Posterior vena cava (tissue), 2 donors: ENCODE measurements at regions of chr7 and their contacts with region 1.

Region 1: DNA sequence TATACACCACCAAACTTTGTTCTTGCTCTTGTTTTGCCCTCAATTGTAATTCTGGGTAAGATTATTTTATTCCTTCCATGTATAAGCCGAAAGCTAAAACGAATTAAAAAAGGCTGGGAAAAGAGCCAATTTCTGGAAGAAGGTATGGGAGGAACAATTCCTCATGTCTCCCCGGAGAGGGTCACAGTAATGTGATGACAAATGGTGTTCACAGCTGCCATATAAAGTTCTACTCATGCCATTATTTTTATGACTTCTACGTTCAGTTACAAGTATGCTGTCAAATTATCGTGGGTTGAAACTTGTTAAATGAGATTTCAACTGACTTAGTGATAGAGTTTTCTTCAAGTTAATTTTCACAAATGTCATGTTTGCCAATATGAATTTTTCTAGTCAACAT is 12.5 kb upstream of the CFAP69 start:
- DNase-seq: no peak

Region 2: DNA sequence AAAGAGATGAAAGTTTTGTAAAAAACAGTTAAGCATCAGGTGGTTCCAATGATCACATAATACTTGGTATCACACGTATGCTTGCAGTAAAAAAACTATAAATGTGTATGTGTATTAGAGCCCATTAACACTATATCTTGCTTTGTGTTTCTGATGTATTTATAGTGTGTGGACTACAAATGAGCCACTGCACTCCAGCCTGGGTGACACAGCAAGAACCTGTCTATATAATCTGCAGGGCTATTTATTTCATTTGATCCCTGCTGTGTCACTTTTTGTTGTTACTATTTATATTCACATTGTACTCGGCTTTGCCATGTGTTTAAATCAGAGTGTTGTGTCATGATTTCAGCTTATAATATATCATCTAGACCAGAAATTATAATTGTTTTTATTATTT is 949.1 kb before region 1 on chr7:
- intact Hi-C with region 1: no loop called
- DNase-seq: no peak

Region 3: DNA sequence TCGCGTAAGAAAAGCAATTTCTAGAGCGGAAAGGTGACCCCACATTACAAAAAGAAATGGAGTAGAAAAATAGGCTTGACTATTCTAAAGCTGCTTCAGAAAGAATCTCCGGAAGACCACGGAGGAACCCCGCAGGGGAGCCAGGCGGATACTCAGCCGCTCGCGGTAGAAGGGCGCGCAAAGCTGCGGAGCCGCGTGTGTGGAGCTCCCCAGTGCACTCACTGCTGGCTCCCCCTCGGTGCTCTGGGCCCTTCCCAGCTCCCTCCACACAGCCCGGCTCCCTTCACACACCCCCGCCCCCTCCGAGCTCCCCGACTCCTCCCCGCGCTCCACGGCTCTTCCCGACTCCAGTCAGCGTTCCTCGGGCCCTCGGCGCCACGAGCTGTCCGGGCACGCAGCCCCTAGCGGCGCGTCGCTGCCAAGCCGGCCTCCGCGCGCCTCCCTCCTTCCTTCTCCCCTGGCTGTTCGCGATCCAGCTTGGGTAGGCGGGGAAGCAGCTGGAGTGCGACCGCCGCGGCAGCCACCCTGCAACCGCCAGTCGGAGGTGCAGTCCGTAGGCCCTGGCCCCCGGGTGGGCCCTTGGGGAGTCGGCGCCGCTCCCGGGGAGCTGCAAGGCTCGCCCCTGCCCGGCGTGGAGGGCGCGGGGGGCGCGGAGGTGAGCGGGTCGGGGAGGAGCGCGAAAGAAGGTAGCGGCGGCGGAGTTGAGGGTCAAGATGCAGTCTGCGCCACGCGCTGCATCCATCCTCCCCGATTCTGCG is 20.9 kb before region 1 on chr7 and contains the start of gene STEAP2:
- intact Hi-C with region 1: no loop called
- DNase-seq: peak; percentile 97
- total RNA-seq, gene STEAP2: 45.9 to 47.7 TPM

Region 4: GRCh38 chr7:90244909-90245851 is 12.8 kb after region 1 on chr7 and contains the start of gene CFAP69:
- intact Hi-C with region 1: loop called in 1 of 2 experiments (anchors 1 kb)
- DNase-seq: peak; percentile 98
- total RNA-seq, gene CFAP69: 11.4 to 13.0 TPM